OCI-LY7 (cell line): ENCODE measurements at regions of chr1 and their contacts with region 1.

Region 1: DNA sequence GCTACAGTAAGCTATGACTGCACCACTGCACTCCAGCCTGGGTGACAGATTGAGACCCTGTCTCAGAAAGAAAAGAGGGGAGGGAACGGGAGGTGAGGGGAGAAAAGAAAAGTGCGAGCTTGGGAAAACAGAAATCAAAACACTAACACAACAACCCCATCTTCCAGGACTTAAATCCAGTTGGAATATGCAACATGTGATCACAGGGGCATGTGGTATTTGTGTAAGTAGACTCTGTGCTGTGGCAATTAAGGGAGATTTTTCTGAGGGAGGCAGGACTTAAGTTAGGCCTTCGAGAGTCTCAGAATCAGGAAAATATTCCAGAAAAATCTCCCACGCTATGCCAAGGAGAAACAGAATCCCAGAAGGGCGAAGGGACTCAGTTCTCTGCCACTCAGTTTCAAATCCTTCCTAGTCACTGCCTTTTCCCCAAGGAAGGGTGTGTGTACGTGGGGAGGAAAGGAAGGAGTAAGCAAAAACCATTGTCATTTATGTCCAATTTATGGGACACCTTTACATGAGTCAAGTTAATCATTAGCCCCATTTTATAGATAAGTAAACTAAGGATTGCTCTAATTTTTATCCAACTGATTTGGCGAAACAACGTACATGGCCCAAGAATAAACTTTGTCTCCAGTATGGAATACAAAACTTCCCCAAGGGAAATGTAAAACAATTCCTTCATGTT is 12.3 kb downstream of the ID3 start:
- DNase-seq: no peak
- H3K4me3 ChIP-seq: no peak overlapping the region
- H3K27ac ChIP-seq: peak overlapping the region; percentile 40
- H3K4me1 ChIP-seq: peaks cover 89% of the 10 kb centered on the region
- CTCF ChIP-seq: no peak

Region 2: GRCh38 chr1:23598424-23598823 is 51.4 kb after region 1 on chr1:
- CTCF ChIA-PET with region 1: interaction called, 3 read pairs
- POLR2A ChIA-PET with region 1: interaction called, 57 read pairs
- intact Hi-C with region 1: no loop called
- DNase-seq: peak; percentile 78
- H3K4me3 ChIP-seq: peak overlapping the region; percentile 53
- H3K27ac ChIP-seq: peak overlapping the region; percentile 94
- H3K4me1 ChIP-seq: peaks cover 100% of the 10 kb centered on the region
- CTCF ChIP-seq: no peak

Region 3: GRCh38 chr1:23634842-23635651 is 88.0 kb after region 1 on chr1:
- CTCF ChIA-PET with region 1: interaction called, 35 read pairs
- POLR2A ChIA-PET with region 1: interaction called, 17 read pairs
- intact Hi-C with region 1: loop called (anchors 1 kb)
- DNase-seq: peak; percentile 82
- H3K4me3 ChIP-seq: peak overlapping the region; percentile 52
- H3K27ac ChIP-seq: peak overlapping the region; percentile 85
- H3K4me1 ChIP-seq: peaks cover 92% of the 10 kb centered on the region
- CTCF ChIP-seq: peak; percentile 93